HepG2 (cell line): ENCODE measurements at regions of chr2 and their contacts with region 1.

Region 1: GRCh38 chr2:205273627-205274026 is 408.7 kb upstream of the NRP2 start:
- DNase-seq: peak; percentile 84
- ATAC-seq: peak; percentile 97
- H3K4me3 ChIP-seq: no peak overlapping the region
- H3K27ac ChIP-seq: no peak overlapping the region
- H3K4me1 ChIP-seq: peaks cover 35% of the 10 kb centered on the region
- H3K27me3 ChIP-seq: no peaks in the 10 kb centered on the region; a peak in 1 of 5 replicates
- CTCF ChIP-seq: no peak
- EP300 ChIP-seq: peak; percentile 51 to 94; a peak in 2 of 4 replicates
- POLR2A ChIP-seq: no peak
- RAD21 ChIP-seq: no peak

Region 2: DNA sequence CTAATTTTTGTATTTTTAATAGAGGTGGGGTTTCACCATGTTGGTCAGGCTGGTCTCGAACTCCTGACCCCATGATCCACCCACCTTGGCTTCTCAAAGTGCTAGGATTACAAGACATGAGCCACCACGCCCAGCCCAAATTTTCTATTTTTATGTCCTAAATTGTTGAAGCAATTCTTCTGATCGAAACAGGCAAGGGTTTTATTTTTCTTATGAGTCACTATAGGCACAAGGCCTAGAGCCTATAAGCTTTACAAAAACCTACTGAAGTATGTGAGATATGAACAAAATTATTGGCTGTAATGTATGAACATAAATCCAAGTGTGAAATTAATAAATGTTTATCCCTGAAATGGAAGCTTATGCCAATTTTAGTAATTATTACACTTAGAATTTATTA is 55.6 kb before region 1 on chr2:
- CTCF ChIA-PET with region 1: no interaction called
- POLR2A ChIA-PET with region 1: no interaction called
- in situ Hi-C with region 1: no loop called
- intact Hi-C with region 1: loop called (anchors 1 kb)
- DNase-seq: no peak
- ATAC-seq: no peak
- H3K4me3 ChIP-seq: no peak overlapping the region
- H3K27ac ChIP-seq: no peak overlapping the region
- H3K4me1 ChIP-seq: peaks cover 24% of the 10 kb centered on the region
- H3K27me3 ChIP-seq: no peaks in the 10 kb centered on the region
- CTCF ChIP-seq: no peak
- EP300 ChIP-seq: no peak
- POLR2A ChIP-seq: no peak
- RAD21 ChIP-seq: no peak

Region 3: DNA sequence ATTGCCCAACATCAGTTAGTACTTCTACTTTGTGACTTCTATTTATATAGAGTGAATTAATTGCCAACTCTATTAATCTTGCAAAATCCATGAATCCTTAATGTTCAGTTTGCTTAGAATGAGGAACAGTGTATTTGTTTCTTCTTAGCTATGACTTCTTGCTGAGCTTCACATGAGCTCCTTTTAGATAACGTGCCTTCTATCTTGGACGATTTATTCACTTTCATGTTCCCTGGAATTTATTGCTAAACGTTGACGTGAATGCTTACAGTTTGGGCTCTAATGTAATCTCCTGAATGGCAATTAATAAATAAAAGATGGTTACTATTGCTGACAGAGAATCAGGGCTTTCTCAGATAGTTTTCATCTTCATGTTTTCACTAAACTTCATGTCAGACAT is 24.2 kb after region 1 on chr2:
- CTCF ChIA-PET with region 1: no interaction called
- POLR2A ChIA-PET with region 1: no interaction called
- in situ Hi-C with region 1: no loop called
- intact Hi-C with region 1: no loop called
- DNase-seq: no peak
- ATAC-seq: no peak
- H3K4me3 ChIP-seq: no peak overlapping the region
- H3K27ac ChIP-seq: no peak overlapping the region
- H3K4me1 ChIP-seq: no peaks in the 10 kb centered on the region
- H3K27me3 ChIP-seq: no peaks in the 10 kb centered on the region
- CTCF ChIP-seq: no peak
- EP300 ChIP-seq: no peak
- POLR2A ChIP-seq: no peak
- RAD21 ChIP-seq: no peak